Transverse colon (tissue), 4 donors: ENCODE measurements at regions of chr16 and their contacts with region 1.

Region 1: DNA sequence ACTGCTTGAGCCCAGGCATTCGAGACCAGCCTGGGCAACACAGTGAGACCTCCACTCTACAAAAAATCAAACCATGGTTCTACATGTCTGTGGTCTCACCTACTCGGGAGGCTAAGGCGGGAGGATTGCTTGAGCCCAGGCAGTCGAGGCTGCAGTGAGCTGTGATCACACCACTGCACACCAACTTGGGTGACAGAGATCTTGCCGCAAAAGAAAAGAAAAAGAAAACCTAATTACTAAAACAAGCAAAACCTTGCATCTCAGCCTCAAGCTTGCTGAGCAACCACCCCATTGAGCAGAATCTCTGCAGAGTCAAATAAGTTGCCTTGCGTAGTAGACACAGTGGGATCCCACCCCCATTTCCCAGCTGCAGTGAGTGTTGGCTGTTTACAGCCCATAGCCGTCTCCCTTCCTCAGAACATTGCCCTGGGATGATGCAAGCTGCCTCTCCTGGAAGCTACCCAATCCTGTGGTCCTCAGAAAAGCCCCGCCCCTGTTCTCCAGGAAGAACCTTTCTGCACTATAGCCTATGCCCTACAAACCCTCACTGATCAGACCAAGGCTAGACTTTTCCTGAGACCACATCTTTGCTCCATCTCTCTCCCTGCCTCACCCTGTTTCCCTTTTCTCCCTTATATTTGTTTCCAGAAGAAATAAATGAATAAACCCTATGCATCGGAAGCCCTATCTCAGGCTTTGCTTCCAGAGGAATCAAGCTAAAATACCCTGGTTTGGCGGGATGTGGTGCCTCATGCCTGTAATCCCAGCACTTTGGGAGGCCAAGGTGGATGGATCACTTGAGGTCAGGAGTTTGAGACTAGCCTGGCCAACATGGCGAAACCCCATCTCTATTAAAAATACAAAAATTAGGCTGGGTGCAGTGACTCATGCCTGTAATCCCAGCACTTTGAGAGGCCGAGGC is 16.7 kb upstream of the ERN2 start:
- DNase-seq: peak; percentile 87
- H3K4me3 ChIP-seq: no peak overlapping the region
- H3K27ac ChIP-seq: peak overlapping the region; percentile 53 to 71 (median 60)
- H3K4me1 ChIP-seq: peaks cover 0 to 16% (median 3%) of the 10 kb centered on the region in 4 donors
- H3K27me3 ChIP-seq: no peaks in the 10 kb centered on the region
- CTCF ChIP-seq: no peak
- EP300 ChIP-seq: no peak
- POLR2A ChIP-seq: no peak

Region 2: DNA sequence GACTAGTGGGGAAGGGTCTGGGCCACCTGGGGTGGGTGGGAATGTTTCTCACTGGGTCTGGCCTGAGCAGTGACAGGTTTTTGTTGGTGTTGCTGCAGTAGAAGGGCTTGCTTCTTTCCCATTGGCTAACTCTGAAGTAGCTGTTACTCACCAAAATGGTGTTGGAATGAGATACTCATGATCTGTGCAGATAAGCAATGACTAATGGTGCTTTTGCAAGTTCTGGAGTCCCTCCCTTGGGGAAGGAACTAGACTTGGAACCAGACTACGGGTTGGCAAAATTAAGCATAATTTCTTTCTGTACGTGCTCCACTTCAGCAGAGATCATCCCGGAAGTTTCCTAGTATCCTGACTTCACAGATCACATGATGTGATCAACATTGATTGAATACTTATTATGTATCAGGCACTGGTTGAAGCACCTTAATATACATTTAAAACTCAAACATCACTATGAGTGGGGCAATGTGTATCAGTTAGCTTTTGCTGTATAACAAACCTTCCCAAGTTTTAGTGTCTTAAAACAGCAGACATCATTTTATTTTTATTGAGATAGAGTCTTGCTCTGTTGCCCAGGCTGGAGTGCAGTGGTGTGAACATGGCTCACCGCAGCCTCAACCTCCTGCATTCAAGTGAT is 55.2 kb after region 1 on chr16:
- in situ Hi-C with region 1: no loop called
- intact Hi-C with region 1: no loop called
- DNase-seq: no peak
- H3K4me3 ChIP-seq: no peak overlapping the region
- H3K27ac ChIP-seq: no peak overlapping the region
- H3K4me1 ChIP-seq: peaks cover 0 to 15% (median 6%) of the 10 kb centered on the region in 4 donors
- H3K27me3 ChIP-seq: no peaks in the 10 kb centered on the region
- CTCF ChIP-seq: no peak
- EP300 ChIP-seq: no peak
- POLR2A ChIP-seq: no peak

Region 3: GRCh38 chr16:24036614-24037013 is 306.9 kb after region 1 on chr16:
- in situ Hi-C with region 1: loop called in 2 of 4 experiments (anchors 10 kb)
- intact Hi-C with region 1: no loop called
- DNase-seq: peak; percentile 49
- H3K4me3 ChIP-seq: no peak overlapping the region
- H3K27ac ChIP-seq: no peak overlapping the region
- H3K4me1 ChIP-seq: peaks cover 0 to 14% (median 0%) of the 10 kb centered on the region in 4 donors
- H3K27me3 ChIP-seq: no peaks in the 10 kb centered on the region
- CTCF ChIP-seq: peak; percentile 62 to 86 (median 70)
- EP300 ChIP-seq: no peak
- POLR2A ChIP-seq: no peak